ENCODE measurements at regions of chr3 and their contacts with region 1.

Region 1: DNA sequence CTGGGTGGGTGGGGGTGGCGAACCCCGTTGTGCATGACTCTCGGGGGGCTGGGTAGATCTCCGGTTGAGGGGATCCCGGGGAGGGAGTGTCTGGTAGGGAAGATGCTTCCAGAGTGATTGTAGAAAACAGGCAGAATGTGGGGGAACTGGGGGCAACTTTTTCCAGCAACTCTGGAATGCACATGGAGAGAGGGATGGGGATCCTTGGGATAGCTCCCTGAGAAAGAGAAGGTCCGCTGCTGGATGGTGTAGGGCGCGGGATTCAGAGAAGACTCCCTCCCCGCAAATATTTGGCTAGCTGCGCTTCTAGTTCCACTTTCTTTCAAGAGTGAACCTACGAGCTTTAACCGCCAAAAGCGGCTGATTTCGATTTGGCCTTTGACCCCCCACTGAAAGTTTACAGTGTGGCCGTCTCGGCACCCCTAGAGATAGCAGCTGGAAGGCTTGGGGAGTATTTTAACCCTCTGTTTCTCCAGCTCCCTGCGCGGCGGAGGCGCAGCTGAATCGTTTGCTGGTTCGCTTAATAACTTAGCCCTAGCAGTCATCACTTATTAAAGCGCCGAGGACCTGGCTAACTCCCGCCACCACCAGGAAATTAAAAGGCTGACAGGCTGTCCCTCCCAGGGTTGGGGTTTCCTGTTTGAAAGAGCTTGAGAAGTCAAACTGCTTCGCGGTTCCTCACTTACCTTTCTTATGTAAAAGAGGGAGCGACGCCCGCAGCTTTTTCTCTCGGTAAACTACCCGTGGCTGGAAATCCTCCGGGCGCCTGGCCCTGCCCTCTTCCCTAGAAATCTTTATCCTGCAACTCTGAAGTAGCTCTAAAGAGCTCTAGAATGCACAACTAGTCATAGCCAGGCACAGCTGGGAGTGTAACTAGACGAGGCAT is 1.2 kb downstream of the PHLDB2 start:
- DNase-seq: peak; percentile 82
- H3K4me3 ChIP-seq: peak overlapping the region; percentile 86 to 91 (median 86)
- H3K27ac ChIP-seq: peak overlapping the region; percentile 97
- H3K4me1 ChIP-seq: peaks cover 38% of the 10 kb centered on the region
- H3K27me3 ChIP-seq: no peaks in the 10 kb centered on the region
- CTCF ChIP-seq: peak; percentile 34 to 61

Region 2: GRCh38 chr3:111577794-111578685 is 282.2 kb before region 1 on chr3:
- CTCF ChIA-PET with region 1: interaction called, 10 read pairs
- dilution Hi-C with region 1: no loop called
- in situ Hi-C with region 1: loop called in 1 of 2 experiments (anchors 25 kb)
- intact Hi-C with region 1: loop called (anchors 2 kb)
- DNase-seq: peak; percentile 80
- H3K4me3 ChIP-seq: no peak overlapping the region
- H3K27ac ChIP-seq: peak overlapping the region; percentile 40
- H3K4me1 ChIP-seq: peaks cover 30% of the 10 kb centered on the region
- H3K27me3 ChIP-seq: no peaks in the 10 kb centered on the region
- CTCF ChIP-seq: peak; percentile 72 to 85

Region 3: GRCh38 chr3:111723293-111724215 is 136.7 kb before region 1 on chr3:
- CTCF ChIA-PET with region 1: interaction called, 35 read pairs
- dilution Hi-C with region 1: no loop called
- in situ Hi-C with region 1: loop called (anchors 5 kb)
- intact Hi-C with region 1: no loop called
- DNase-seq: peak; percentile 64
- H3K4me3 ChIP-seq: no peak overlapping the region
- H3K27ac ChIP-seq: no peak overlapping the region
- H3K4me1 ChIP-seq: peaks cover 10% of the 10 kb centered on the region
- H3K27me3 ChIP-seq: no peaks in the 10 kb centered on the region
- CTCF ChIP-seq: no peak

Region 4: DNA sequence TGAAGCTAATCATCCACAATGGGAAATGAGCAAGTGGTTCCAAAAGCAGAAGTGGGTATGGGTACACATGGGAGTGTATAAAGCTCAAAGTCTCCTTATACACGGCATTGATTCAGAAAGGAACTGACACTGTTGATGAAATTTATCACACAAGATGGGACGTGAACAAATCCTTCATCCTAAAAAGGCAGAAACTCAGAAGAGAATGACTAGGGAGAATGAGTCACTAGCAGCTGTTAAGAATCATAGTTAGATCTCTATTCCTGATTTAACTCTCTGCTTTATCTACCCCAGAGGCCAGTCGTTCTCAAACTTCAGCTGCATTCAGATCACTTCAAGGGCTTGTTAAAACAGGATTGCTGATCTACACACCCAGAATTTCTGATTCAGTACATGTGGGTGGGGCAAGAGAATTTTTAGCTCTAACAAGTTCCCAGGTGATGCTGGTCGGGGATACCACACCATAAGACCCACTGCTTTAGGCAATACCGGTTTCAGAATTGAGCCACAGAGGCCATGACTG is 98.8 kb before region 1 on chr3:
- CTCF ChIA-PET with region 1: interaction called, 4 read pairs
- dilution Hi-C with region 1: no loop called
- in situ Hi-C with region 1: no loop called
- intact Hi-C with region 1: loop called (anchors 1 kb)
- DNase-seq: peak; percentile 100
- H3K4me3 ChIP-seq: no peak overlapping the region
- H3K27ac ChIP-seq: peak overlapping the region; percentile 100
- H3K4me1 ChIP-seq: peaks cover 60% of the 10 kb centered on the region
- H3K27me3 ChIP-seq: no peaks in the 10 kb centered on the region
- CTCF ChIP-seq: no peak

Region 5: GRCh38 chr3:111846717-111847116 is 13.5 kb before region 1 on chr3:
- CTCF ChIA-PET with region 1: no interaction called
- dilution Hi-C with region 1: no loop called
- in situ Hi-C with region 1: no loop called
- intact Hi-C with region 1: loop called (anchors 1 kb)
- DNase-seq: peak; percentile 93
- H3K4me3 ChIP-seq: no peak overlapping the region
- H3K27ac ChIP-seq: peak overlapping the region; percentile 84
- H3K4me1 ChIP-seq: peaks cover 44% of the 10 kb centered on the region
- H3K27me3 ChIP-seq: no peaks in the 10 kb centered on the region
- CTCF ChIP-seq: no peak

Region 6: GRCh38 chr3:111936191-111936841 is 76.1 kb after region 1 on chr3:
- CTCF ChIA-PET with region 1: no interaction called
- dilution Hi-C with region 1: loop called (anchors 5 kb)
- in situ Hi-C with region 1: no loop called
- intact Hi-C with region 1: loop called (anchors 2 kb)
- DNase-seq: peak; percentile 37
- H3K4me3 ChIP-seq: no peak overlapping the region
- H3K27ac ChIP-seq: peak overlapping the region; percentile 99
- H3K4me1 ChIP-seq: peaks cover 29% of the 10 kb centered on the region
- H3K27me3 ChIP-seq: no peaks in the 10 kb centered on the region
- CTCF ChIP-seq: no peak

Measured in mammary epithelial cell (primary cell).